Endothelial cell of umbilical vein (primary cell): ENCODE measurements at regions of chr1 and their contacts with region 1.

Region 1: DNA sequence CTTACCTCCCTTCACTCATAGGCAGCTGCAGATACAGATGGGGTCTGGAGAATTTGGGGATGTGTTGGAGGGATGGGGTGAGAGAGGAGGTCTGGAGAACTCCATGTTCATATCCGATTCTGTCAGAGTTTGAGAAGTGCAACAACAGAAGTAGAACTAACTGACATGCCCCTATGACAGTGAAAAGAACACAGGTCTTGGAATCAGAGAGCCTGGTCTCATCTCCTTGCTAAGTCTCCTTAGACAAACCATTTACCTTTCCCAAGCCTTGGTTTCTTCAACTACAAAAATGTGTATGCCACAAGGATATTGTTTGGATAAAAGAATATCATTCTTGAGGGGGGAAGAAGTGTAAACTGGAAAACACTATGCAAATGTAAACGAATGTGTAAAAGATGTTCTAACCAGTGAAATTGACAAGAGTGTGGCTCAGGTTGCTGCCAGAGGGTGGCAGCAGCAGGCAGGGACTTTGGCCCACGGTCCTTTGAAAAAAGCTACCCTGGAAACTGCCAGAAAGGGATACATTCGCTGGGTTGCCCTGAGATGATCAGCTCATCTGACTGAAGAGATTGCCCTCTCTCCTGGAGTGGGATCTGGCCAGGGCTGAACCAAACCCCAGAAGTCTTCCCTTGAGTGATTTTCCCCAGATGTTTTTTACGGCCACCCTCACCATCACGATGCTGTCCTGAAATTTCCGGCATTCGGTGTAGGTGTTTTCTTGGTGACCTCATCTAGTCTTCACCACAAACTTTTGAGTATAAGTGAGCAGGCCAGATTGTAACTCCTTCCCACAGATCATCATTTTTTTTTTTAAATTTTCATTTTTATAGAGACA is 17.0 kb upstream of the CD2 start:
- DNase-seq: peak; percentile 60
- H3K4me3 ChIP-seq: no peak overlapping the region
- H3K27ac ChIP-seq: no peak overlapping the region
- H3K4me1 ChIP-seq: no peaks in the 10 kb centered on the region
- H3K27me3 ChIP-seq: peaks cover 0 to 2% of the 10 kb centered on the region in 2 experiments
- CTCF ChIP-seq: peak; percentile 77 to 80
- POLR2A ChIP-seq: no peak

Region 2: GRCh38 chr1:116556289-116557006 is 180.8 kb before region 1 on chr1:
- CTCF ChIA-PET with region 1: no interaction called
- POLR2A ChIA-PET with region 1: no interaction called
- dilution Hi-C with region 1: no loop called
- intact Hi-C with region 1: no loop called
- DNase-seq: no peak
- H3K4me3 ChIP-seq: no peak overlapping the region
- H3K27ac ChIP-seq: no peak overlapping the region
- H3K4me1 ChIP-seq: peaks cover 2% of the 10 kb centered on the region
- H3K27me3 ChIP-seq: no peaks in the 10 kb centered on the region
- CTCF ChIP-seq: no peak
- POLR2A ChIP-seq: no peak

Region 3: DNA sequence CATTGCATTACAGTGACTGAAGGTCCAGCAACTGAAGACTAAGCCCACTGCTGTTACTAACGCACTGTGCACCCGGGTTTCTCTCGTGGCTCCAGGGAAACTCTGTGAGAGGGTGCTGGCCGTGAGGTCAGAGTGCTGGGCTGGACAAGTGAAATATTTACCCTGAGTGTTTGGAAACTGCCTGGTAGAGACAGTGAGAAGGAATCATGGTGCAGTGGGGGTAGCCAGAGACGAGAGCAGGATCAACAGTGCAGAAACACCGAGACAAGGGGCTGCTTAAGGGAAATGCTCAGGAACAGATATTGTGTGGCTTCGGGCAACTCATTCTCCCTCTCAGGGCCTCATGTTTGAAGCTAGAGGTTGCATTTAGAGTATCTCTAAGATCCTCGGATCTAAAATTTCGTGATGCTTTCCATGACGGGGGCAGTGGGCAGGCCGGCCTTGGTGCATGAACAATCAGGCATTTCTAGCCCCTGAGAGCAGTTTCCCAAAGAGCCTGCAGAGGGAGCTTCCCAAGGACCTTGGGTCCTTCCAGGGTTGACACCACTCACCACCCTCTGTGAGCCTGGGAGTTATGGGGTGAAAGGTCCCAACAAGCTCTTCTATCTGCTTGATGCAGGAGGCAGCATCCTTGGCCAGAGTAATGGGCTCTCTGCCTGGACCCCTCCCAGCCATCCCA is 26.7 kb after region 1 on chr1:
- CTCF ChIA-PET with region 1: interaction called, 11 read pairs
- POLR2A ChIA-PET with region 1: no interaction called
- dilution Hi-C with region 1: no loop called
- intact Hi-C with region 1: no loop called
- DNase-seq: peak; percentile 5
- H3K4me3 ChIP-seq: no peak overlapping the region
- H3K27ac ChIP-seq: no peak overlapping the region
- H3K4me1 ChIP-seq: no peaks in the 10 kb centered on the region
- H3K27me3 ChIP-seq: no peaks in the 10 kb centered on the region
- CTCF ChIP-seq: peak; percentile 30 to 50
- POLR2A ChIP-seq: no peak

Region 4: GRCh38 chr1:116853670-116854402 is 116.6 kb after region 1 on chr1:
- CTCF ChIA-PET with region 1: interaction called, 10 read pairs
- POLR2A ChIA-PET with region 1: no interaction called
- dilution Hi-C with region 1: no loop called
- intact Hi-C with region 1: no loop called
- DNase-seq: peak; percentile 94
- H3K4me3 ChIP-seq: no peak overlapping the region
- H3K27ac ChIP-seq: peak overlapping the region; percentile 72
- H3K4me1 ChIP-seq: peaks cover 30% of the 10 kb centered on the region
- H3K27me3 ChIP-seq: no peaks in the 10 kb centered on the region
- CTCF ChIP-seq: no peak
- POLR2A ChIP-seq: peak; percentile 3

Region 5: GRCh38 chr1:116934586-116935207 is 197.5 kb after region 1 on chr1:
- CTCF ChIA-PET with region 1: interaction called, 15 read pairs
- POLR2A ChIA-PET with region 1: no interaction called
- dilution Hi-C with region 1: no loop called
- intact Hi-C with region 1: no loop called
- DNase-seq: no peak
- H3K4me3 ChIP-seq: no peak overlapping the region
- H3K27ac ChIP-seq: no peak overlapping the region
- H3K4me1 ChIP-seq: no peaks in the 10 kb centered on the region
- H3K27me3 ChIP-seq: no peaks in the 10 kb centered on the region
- CTCF ChIP-seq: peak in 1 of 2 donors; percentile 6
- POLR2A ChIP-seq: no peak